BJ (cell line): ENCODE measurements at regions of chr17 and their contacts with region 1.

Region 1: GRCh38 chr17:3913531-3914311 is 2.5 kb downstream of the P2RX1 start:
- DNase-seq: no peak
- H3K4me3 ChIP-seq: no peak overlapping the region
- H3K27me3 ChIP-seq: no peaks in the 10 kb centered on the region
- CTCF ChIP-seq: peak; percentile 99

Region 2: DNA sequence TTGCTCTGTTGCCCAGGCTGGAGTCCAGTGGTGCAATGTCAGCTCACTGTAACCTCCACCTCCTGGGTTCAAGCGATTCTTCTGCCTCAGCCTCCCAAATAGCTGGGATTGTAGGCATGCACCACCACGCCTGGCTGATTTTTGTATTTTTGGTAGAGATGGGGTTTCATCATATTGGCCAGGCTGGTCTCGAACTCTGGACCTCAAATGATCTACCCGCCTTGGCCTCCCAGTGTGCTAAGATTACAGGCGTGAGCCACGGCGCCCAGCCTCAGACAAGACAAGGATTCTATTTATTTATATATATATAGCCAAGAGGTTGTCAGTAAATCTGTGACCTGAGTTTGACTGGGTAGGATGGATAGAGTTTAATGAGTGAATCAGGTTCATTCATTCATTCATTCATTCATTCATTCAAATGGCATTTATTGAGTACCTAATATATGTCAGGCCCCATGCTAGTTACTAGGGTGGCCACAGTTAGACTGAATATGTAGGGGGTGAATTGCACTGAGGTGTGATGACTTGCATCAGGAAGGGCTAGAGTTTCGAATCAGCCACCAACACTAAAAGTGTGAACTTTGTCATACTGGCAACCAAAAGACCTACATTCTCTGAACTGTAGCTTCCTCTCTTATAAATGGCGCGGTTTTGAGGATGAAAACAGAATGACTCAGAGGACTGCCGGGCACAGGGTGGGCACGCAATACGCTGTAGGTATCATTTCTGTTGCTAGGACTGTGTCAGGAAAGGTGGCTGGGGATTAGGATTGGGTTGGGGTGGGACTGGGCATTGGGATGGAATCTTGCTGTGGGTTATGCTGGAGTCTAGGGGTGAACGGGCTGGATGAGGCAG is 150.6 kb before region 1 on chr17:
- CTCF ChIA-PET with region 1: no interaction called
- POLR2A ChIA-PET with region 1: no interaction called
- DNase-seq: no peak
- H3K4me3 ChIP-seq: no peak overlapping the region
- H3K27me3 ChIP-seq: no peaks in the 10 kb centered on the region; the same call in 1 of the 2 replicates
- CTCF ChIP-seq: no peak

Region 3: DNA sequence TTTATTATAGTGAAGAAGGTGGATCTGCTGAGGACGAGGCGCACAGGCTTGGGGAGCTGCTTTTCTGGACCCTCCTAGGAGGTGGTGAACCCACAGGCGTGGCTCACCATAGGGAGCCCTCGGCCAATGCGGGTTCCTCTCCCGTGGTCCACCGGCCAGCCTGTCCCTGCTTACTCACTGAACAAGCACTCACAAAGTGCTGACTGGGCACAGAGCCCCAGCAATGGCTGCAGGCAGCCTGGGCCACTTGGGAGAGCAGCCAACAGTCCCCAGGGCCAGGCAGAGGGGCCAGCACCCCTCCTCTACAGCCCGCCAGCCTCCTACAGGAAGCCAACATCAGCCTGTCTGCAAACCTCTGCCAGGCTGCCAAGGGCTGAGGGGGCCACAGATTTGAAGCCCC is 48.5 kb before region 1 on chr17:
- CTCF ChIA-PET with region 1: interaction called, 11 read pairs
- POLR2A ChIA-PET with region 1: no interaction called
- DNase-seq: no peak
- H3K4me3 ChIP-seq: no peak overlapping the region
- H3K27me3 ChIP-seq: no peaks in the 10 kb centered on the region
- CTCF ChIP-seq: no peak

Region 4: GRCh38 chr17:3927628-3928340 is 14.1 kb after region 1 on chr17:
- CTCF ChIA-PET with region 1: interaction called, 40 read pairs
- POLR2A ChIA-PET with region 1: no interaction called
- DNase-seq: no peak
- H3K4me3 ChIP-seq: no peak overlapping the region
- H3K27me3 ChIP-seq: no peaks in the 10 kb centered on the region; the same call in 1 of the 2 replicates
- CTCF ChIP-seq: no peak

Region 5: GRCh38 chr17:3944485-3945388 is 31.0 kb after region 1 on chr17:
- CTCF ChIA-PET with region 1: interaction called, 11 read pairs
- POLR2A ChIA-PET with region 1: no interaction called
- DNase-seq: no peak
- H3K4me3 ChIP-seq: peak overlapping the region; percentile 65
- H3K27me3 ChIP-seq: no peaks in the 10 kb centered on the region
- CTCF ChIP-seq: no peak

Region 6: DNA sequence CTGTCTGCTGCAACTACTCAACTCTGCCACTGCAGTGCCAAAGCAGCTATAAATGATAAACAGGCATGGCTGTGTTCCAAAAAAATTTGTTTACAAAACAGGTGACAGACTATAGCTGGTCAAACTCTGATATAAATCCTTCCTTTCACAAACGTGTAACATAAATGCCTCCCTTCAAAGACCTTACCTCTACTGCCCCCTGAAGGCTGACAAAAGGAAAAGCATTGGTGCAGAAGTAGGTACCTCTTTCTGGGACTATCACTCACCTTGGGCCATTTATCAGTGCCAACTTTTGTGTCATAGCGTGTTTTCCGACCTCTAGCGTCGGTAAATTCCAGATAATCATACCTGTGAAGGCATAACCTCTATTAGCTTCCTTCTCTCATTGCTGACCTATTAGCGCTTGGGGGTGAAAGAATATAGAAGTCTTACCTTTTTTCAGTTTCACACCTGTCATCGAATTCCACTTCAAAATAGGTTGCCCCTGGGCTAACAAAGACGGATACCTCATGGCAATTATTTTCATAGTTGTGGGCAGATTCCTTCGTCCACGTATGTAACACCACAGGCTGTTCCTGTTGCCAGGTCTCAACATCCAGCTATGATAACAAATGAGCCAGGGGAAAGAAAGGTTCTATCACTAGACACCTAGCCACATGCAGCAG is 161.2 kb after region 1 on chr17:
- CTCF ChIA-PET with region 1: interaction called, 20 read pairs
- POLR2A ChIA-PET with region 1: no interaction called
- DNase-seq: no peak
- H3K4me3 ChIP-seq: no peak overlapping the region
- H3K27me3 ChIP-seq: no peaks in the 10 kb centered on the region
- CTCF ChIP-seq: peak; percentile 68